Tibial artery (tissue), 4 donors: ENCODE measurements at regions of chr4 and their contacts with region 1.

Region 1: GRCh38 chr4:31071508-31072486 is 351.6 kb downstream of the PCDH7 start:
- DNase-seq: no peak
- H3K4me3 ChIP-seq: no peak overlapping the region
- H3K27ac ChIP-seq: no peak overlapping the region
- H3K4me1 ChIP-seq: peaks cover 0 to 63% (median 2%) of the 10 kb centered on the region in 4 donors
- H3K27me3 ChIP-seq: no peaks in the 10 kb centered on the region
- CTCF ChIP-seq: no peak

Region 2: GRCh38 chr4:30719460-30720020 is 352.3 kb before region 1 on chr4:
- intact Hi-C with region 1: loop called (anchors 10 kb)
- DNase-seq: peak; percentile 72 to 90
- H3K4me3 ChIP-seq: peak overlapping the region; percentile 73 to 76
- H3K27ac ChIP-seq: peak overlapping the region; percentile 81 to 82
- H3K4me1 ChIP-seq: peaks cover 0 to 23% (median 0%) of the 10 kb centered on the region in 4 donors
- H3K27me3 ChIP-seq: no peaks in the 10 kb centered on the region
- CTCF ChIP-seq: no peak